Naive thymus-derived CD4-positive, alpha-beta T cell (primary cell): ENCODE measurements at regions of chr7 and their contacts with region 1.

Region 1: GRCh38 chr7:5854738-5855137 is 25.9 kb upstream of the OCM start:
- DNase-seq: no peak
- ATAC-seq: no peak
- H3K4me3 ChIP-seq: no peak overlapping the region
- H3K4me3 Mint-ChIP-seq: no peak overlapping the region
- H3K27ac ChIP-seq: no peak overlapping the region
- H3K27ac Mint-ChIP-seq: peak overlapping the region in 5 of 9 donors; percentile 8 to 71 (median 32)
- H3K4me1 ChIP-seq: peaks cover 8 to 17% of the 10 kb centered on the region in 2 donors
- H3K4me1 Mint-ChIP-seq: peaks cover 0 to 28% (median 18%) of the 10 kb centered on the region in 7 donors
- H3K27me3 ChIP-seq: no peaks in the 10 kb centered on the region
- H3K27me3 Mint-ChIP-seq: no peaks in the 10 kb centered on the region

Region 2: GRCh38 chr7:5822742-5823503 is 31.8 kb before region 1 on chr7:
- CTCF ChIA-PET with region 1: interaction called, 3 read pairs
- POLR2A ChIA-PET with region 1: interaction called, 7 read pairs
- intact Hi-C with region 1: loop called in 1 of 2 experiments (anchors 5 kb)
- DNase-seq: peak; percentile 88 to 99 (median 99)
- ATAC-seq: peak; percentile 95
- H3K4me3 ChIP-seq: peak overlapping the region; percentile 95
- H3K4me3 Mint-ChIP-seq: peak overlapping the region; percentile 74 to 94 (median 88)
- H3K27ac ChIP-seq: peak overlapping the region; percentile 86
- H3K27ac Mint-ChIP-seq: peak overlapping the region; percentile 82 to 97 (median 93)
- H3K4me1 ChIP-seq: peaks cover 15% of the 10 kb centered on the region in 2 donors
- H3K4me1 Mint-ChIP-seq: peaks cover 15 to 43% (median 23%) of the 10 kb centered on the region in 7 donors
- H3K27me3 ChIP-seq: no peaks in the 10 kb centered on the region
- H3K27me3 Mint-ChIP-seq: no peaks in the 10 kb centered on the region

Region 3: DNA sequence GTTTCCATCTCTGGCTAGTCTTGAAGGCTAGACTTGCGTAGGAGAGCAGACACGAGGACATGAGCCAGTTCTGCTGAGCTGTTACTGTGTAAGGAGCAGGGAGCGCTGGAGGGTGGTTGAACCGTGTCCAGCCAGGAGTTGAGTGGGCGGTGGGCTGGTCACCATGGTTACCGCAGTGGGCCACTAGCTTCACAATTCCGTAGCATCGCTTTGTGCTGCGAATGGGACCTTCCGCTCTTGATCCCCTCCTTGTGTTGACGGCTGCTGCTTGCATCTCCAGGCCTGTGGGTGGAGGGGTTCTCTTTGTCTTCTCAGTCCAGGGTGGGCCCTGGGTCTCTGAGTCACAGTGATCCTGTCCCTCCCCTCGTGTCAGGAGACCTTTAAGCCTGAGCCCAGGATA is 23.5 kb before region 1 on chr7:
- CTCF ChIA-PET with region 1: interaction called, 7 read pairs
- POLR2A ChIA-PET with region 1: interaction called, 19 read pairs
- intact Hi-C with region 1: loop called in 1 of 2 experiments (anchors 2 kb)
- DNase-seq: no peak
- ATAC-seq: no peak
- H3K4me3 ChIP-seq: no peak overlapping the region
- H3K4me3 Mint-ChIP-seq: no peak overlapping the region
- H3K27ac ChIP-seq: no peak overlapping the region
- H3K27ac Mint-ChIP-seq: peak overlapping the region in 6 of 9 donors; percentile 43 to 98 (median 67)
- H3K4me1 ChIP-seq: peaks cover 12 to 36% of the 10 kb centered on the region in 2 donors
- H3K4me1 Mint-ChIP-seq: peaks cover 23 to 66% (median 40%) of the 10 kb centered on the region in 7 donors
- H3K27me3 ChIP-seq: no peaks in the 10 kb centered on the region
- H3K27me3 Mint-ChIP-seq: no peaks in the 10 kb centered on the region

Region 4: GRCh38 chr7:6106140-6106904 is 251.6 kb after region 1 on chr7:
- CTCF ChIA-PET with region 1: no interaction called
- POLR2A ChIA-PET with region 1: no interaction called
- intact Hi-C with region 1: loop called in 1 of 2 experiments (anchors 2 kb)
- DNase-seq: peak in 7 of 9 donors; percentile 27 to 57 (median 51)
- ATAC-seq: no peak
- H3K4me3 ChIP-seq: peak overlapping the region; percentile 76
- H3K4me3 Mint-ChIP-seq: peak overlapping the region; percentile 84 to 96 (median 92)
- H3K27ac ChIP-seq: peak overlapping the region; percentile 90
- H3K27ac Mint-ChIP-seq: peak overlapping the region; percentile 87 to 97 (median 93)
- H3K4me1 ChIP-seq: peaks cover 7 to 9% of the 10 kb centered on the region in 2 donors
- H3K4me1 Mint-ChIP-seq: peaks cover 23 to 49% (median 41%) of the 10 kb centered on the region in 7 donors
- H3K27me3 ChIP-seq: no peaks in the 10 kb centered on the region
- H3K27me3 Mint-ChIP-seq: no peaks in the 10 kb centered on the region

Region 5: DNA sequence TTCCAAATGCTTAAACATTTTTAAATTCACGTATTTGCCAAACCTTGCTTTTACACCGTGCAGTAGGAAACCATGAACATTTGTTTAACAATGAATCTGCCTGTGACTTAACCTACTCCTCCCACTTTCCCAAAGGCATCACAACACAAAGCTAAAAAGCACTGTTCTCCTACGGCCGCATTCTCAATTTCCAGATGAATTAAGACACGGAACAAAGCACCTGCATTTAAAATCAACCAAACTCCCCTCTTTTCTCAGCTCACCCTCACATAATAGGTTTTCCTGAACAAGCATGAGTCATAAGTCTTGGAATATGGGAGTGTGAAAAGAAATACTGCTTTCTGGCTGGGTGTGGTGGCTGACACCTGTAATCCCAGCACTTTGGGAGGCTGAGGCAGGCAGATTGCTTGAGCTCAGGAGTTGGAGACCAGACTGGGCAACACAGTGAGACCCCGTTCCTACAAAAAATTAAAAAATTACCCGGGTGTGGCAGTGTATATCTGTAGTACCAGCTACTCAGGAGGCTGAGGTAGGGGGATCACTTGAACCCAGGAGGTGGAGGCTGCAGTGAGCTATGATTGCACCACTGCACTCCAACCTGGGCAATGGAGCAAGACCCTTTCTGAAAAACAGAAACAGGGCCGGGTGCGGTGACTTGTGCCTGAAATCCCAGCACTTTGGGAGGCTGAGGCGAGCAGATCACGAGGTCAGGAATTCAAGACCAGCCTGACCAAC is 469.4 kb after region 1 on chr7:
- CTCF ChIA-PET with region 1: interaction called, 5 read pairs
- POLR2A ChIA-PET with region 1: no interaction called
- intact Hi-C with region 1: loop called in 1 of 2 experiments (anchors 2 kb)
- DNase-seq: no peak
- ATAC-seq: no peak
- H3K4me3 ChIP-seq: no peak overlapping the region
- H3K4me3 Mint-ChIP-seq: no peak overlapping the region
- H3K27ac ChIP-seq: no peak overlapping the region
- H3K27ac Mint-ChIP-seq: no peak overlapping the region
- H3K4me1 ChIP-seq: no peaks in the 10 kb centered on the region
- H3K4me1 Mint-ChIP-seq: peaks cover 3 to 6% (median 5%) of the 10 kb centered on the region in 7 donors
- H3K27me3 ChIP-seq: no peaks in the 10 kb centered on the region
- H3K27me3 Mint-ChIP-seq: peaks cover 0 to 3% (median 0%) of the 10 kb centered on the region in 5 donors

Region 6: DNA sequence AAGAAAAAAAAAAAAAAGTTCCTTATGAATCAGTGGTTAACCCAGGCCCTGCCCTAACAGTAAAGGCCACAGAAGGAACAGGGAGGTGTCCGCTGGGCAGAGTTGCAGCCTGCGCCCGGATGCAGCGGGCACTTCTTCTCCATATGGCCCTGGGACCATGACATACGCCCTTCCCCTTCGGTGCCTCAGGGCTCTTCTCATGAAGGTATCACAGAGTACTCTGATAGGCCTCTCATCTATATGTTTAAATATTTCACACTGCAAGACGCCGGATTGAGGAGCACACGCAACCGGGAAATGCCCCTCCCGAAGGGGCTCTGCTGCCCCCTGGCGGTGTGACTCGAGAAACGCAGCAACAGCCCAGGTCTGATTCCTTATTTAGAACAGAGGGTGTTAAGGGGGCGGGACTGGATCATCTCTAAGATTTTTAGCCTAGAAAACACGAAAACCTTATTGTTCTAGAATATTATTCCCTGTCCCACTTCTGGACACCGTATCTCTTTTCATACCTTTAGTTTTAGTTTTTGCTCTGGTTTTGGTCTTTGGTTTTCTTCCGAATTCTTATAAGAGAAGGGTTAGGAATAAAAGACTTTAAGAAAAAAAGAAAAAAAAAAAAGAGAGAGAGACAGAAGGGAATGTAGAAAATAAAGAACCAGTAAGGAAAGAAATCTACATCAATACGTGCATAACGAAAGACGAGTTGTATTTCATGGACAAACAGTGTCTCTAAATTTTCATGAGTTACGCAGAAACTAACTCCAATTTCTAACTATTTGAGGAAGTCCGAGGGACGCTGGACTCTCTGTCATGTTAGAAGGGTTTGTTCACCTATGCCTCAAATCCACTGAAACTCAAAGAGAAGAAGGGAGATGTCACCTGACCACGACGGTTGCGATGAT is 581.0 kb after region 1 on chr7:
- CTCF ChIA-PET with region 1: no interaction called
- POLR2A ChIA-PET with region 1: no interaction called
- intact Hi-C with region 1: loop called in 1 of 2 experiments (anchors 10 kb)
- DNase-seq: peak; percentile 80 to 95 (median 89)
- ATAC-seq: peak; percentile 96
- H3K4me3 ChIP-seq: peak overlapping the region; percentile 34
- H3K4me3 Mint-ChIP-seq: peak overlapping the region; percentile 75 to 90 (median 84)
- H3K27ac ChIP-seq: peak overlapping the region; percentile 70
- H3K27ac Mint-ChIP-seq: peak overlapping the region; percentile 81 to 97 (median 91)
- H3K4me1 ChIP-seq: peaks cover 6 to 27% of the 10 kb centered on the region in 2 donors
- H3K4me1 Mint-ChIP-seq: peaks cover 29 to 59% (median 53%) of the 10 kb centered on the region in 7 donors
- H3K27me3 ChIP-seq: no peaks in the 10 kb centered on the region
- H3K27me3 Mint-ChIP-seq: no peaks in the 10 kb centered on the region

Region 7: DNA sequence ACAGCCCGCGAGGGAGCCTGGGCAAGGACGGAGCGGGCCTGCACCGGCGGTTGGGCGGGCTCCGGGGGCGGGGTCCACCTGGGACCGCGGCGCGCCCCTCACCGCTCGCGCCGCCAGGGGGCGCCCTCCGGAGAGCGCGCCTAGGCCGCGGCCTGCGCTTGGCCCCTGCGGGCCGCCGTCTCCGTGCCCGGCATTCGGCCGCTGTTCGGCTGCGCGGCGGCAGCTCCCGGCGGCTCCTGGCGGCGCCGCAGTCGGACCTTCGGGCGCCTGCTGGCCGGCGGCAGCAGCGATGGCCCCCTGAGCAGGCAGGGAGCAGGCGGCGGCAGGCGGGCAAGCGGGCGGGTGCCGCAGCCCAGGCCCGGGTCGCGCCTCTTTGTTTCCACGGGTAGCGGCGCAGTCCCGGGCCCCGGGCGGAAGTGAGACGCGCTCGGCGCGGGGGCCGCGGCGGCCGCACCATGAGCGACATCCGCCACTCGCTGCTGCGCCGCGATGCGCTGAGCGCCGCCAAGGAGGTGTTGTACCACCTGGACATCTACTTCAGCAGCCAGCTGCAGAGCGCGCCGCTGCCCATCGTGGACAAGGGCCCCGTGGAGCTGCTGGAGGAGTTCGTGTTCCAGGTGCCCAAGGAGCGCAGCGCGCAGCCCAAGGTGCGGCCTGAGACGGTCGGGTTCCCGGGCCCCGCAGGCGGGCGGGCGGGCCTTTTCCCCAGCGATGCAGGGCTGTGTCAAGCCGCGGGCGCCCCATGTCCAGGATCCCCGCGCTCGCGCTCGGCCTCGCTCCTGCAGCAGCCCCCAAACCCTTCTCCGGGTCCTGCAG is 735.3 kb after region 1 on chr7 and contains the start of gene INTS15:
- CTCF ChIA-PET with region 1: interaction called, 3 read pairs
- POLR2A ChIA-PET with region 1: no interaction called
- intact Hi-C with region 1: loop called in 1 of 2 experiments (anchors 1 kb)
- DNase-seq: peak; percentile 72 to 95 (median 92)
- ATAC-seq: peak; percentile 98
- H3K4me3 ChIP-seq: peak within 1 kb of the TSS; percentile 77
- H3K4me3 Mint-ChIP-seq: peak within 1 kb of the TSS; percentile 88 to 98 (median 94)
- H3K27ac ChIP-seq: peak within 1 kb of the TSS; percentile 88
- H3K27ac Mint-ChIP-seq: peak within 1 kb of the TSS; percentile 90 to 97 (median 94)
- H3K4me1 ChIP-seq: peaks cover 14 to 19% of the 10 kb centered on the region in 2 donors
- H3K4me1 Mint-ChIP-seq: peaks cover 10 to 35% (median 18%) of the 10 kb centered on the region in 7 donors
- H3K27me3 ChIP-seq: no peaks in the 10 kb centered on the region
- H3K27me3 Mint-ChIP-seq: no peaks in the 10 kb centered on the region
- total RNA-seq, gene INTS15: 39.9 to 69.1 (median 56.5) TPM